Posterior cingulate gyrus (tissue), 11 donors: ENCODE measurements at regions of chr12 and their contacts with region 1.

Region 1: DNA sequence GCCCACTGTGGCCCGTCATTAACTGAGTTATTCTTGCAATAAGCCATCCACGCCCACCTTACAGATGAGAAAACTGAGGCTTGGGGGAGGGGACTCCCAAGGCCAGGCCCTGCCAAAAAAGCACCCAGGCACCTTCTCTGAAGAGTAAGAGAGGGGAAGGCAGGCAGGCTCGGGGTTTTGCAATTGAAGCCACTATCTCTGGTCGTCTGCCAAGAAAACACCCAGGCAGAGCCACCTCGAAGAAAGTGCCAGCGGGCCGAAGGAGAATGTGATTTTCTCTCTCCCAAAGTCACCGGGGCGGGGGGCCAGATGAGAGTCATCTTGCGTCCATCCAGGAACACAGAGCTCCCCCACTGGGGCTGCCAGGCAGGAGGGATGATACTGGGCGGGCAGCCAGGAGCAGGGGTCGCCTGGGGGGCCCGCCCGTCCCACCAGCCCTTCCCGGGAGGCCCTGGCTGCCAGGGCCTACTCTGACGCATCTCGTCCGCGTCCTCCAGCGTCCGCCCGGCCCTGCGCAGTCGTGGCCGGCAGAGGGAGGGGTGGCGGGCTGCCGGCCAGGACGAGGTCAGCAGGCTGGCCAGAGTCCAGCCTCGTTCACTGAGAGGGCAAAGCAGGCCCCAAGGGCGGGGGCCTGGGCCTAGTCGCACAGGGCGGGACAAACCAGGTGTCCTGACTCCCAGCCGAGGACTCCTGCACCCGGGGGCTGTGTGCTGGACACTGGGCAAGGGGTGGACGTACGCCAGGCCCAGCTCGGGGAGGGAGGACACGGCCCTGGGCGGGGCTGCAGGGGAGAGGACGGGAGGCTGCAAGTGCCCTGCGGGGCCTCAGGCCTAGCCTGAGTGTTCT is 74.4 kb downstream of the RFLNA start:
- DNase-seq: peak in 9 of 10 donors; percentile 69 to 96 (median 76)

Region 2: GRCh38 chr12:124388679-124389536 is 19.6 kb after region 1 on chr12:
- intact Hi-C with region 1: loop called (anchors 2 kb)
- DNase-seq: peak; percentile 82 to 98 (median 86)

Region 3: DNA sequence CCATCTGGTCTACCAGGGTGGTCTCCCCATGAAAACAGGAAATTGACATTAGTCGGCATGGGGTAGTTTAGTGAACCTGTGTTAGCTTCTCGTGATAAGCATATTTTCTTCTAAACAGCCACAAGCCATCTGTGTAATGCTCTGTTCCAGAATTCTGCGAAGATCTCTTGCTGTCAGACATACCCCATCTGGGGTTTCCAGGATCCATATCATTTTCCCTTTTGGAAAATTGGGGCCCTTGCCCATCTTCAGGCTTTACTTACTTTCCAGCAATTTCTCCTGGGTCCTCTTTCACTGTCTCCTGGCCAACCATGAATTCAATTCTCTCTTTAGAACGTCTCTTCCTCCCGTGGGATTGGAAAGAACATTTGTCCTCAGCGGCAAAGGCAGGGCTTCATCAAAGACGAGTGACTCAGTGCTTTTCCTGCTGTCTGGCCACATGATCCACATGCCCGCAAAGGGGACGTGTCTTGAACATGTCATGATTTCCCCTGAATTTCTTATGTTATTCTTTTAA is 219.5 kb after region 1 on chr12:
- intact Hi-C with region 1: no loop called
- DNase-seq: peak in 5 of 10 donors; percentile 35 to 90 (median 70)